Activated CD4-positive, alpha-beta memory T cell treated with anti-CD3 and anti-CD28 coated beads for 36 hours (primary cell): ENCODE measurements at regions of chr1 and their contacts with region 1.

Region 1: DNA sequence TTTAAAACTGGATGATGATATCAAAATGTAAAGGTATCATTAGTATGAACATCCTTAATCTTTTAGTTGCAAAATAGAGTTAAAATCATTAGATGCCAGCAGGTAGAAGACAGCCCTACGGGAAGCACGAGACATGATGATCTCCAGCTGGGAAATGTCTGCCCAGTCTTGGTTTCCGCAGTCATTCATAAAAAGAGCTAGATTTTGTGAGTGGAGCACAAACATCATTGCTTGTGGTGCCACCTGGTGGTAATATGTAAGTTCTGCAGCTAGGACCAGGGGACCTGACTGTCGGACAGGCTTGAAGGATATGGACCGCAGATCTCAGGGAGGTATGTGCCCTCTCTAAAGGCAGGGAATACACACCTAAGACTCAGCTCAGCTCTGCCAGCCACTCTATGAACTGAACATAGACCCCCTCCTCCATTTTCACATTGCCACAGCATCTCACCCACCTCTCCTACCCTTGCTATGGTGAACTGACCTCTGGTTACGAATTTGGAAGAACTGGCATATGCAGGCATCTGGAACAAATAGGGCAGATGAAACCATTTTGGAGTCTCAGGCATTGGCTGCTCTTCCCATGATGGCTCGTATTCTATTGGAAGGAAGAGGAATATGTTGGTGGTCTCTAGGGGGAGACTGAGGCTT is 9.2 kb downstream of the FCMR start:
- DNase-seq: peak; percentile 75
- H3K4me3 Mint-ChIP-seq: no peak overlapping the region
- H3K27ac Mint-ChIP-seq: peak overlapping the region; percentile 19
- H3K4me1 Mint-ChIP-seq: peaks cover 87% of the 10 kb centered on the region
- H3K27me3 Mint-ChIP-seq: no peaks in the 10 kb centered on the region

Region 2: DNA sequence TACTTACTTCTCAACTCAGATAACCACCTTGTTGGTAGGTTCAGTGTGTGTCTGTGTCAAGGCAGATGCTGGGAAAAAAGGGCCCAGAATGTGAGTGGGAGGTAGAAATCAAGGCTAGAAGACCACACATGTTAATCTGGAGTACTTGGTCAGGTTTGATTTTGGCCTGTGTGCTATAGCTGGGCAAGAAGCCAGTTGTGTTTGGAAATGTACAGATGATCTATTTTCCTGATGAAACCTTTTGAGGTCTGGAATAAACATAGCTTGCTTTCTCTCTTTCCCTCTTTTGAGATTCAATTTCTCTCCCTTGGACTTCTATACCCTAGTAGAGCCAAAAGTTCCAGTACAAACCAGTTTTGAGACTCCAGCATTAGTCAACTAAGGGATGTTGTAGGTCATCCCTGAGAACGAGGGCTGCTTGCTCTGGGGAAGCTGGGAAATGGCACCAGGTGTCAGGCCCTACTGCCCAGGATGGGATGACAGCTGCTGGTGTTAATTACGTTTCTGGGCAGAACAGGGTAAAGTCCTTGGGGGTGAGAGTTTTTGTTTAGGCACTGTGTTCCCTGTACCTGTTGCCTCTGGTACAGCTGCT is 212.0 kb before region 1 on chr1:
- CTCF ChIA-PET with region 1: interaction called, 10 read pairs
- POLR2A ChIA-PET with region 1: no interaction called
- intact Hi-C with region 1: no loop called
- DNase-seq: no peak
- H3K4me3 Mint-ChIP-seq: no peak overlapping the region
- H3K27ac Mint-ChIP-seq: peak overlapping the region; percentile 43
- H3K4me1 Mint-ChIP-seq: peaks cover 89% of the 10 kb centered on the region
- H3K27me3 Mint-ChIP-seq: no peaks in the 10 kb centered on the region

Region 3: DNA sequence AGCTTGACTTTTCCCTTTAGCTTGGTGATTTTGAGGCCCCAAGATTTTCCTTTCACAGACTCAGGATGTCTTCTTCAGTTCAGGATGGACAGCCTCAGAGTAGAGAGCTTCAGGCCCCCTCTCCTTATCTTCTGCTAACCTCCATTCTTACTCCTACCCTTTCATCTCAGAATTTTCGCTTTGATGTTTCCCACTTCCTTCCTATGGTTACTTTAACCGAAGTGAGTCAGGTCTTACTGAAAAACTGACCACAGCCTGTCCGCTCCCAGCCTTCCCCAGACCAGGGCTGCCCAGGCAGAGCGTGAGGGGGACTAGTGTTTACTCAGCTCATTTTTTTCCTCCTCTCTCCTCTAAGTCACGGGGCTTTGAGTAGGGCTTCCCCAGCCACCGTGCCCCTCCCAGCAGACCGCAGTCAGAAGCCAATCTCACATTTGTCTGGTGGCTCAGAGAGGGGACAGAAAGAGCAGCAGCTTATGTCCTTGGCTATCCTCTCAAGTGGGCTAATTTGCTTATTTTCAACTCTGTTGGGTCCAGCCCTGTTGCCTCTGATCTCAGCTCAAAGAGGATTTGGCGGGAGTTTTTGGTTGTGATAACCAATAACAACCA is 146.2 kb before region 1 on chr1:
- CTCF ChIA-PET with region 1: interaction called, 39 read pairs
- POLR2A ChIA-PET with region 1: interaction called, 3 read pairs
- intact Hi-C with region 1: no loop called
- DNase-seq: peak; percentile 84
- H3K4me3 Mint-ChIP-seq: peak overlapping the region; percentile 44
- H3K27ac Mint-ChIP-seq: peak overlapping the region; percentile 68
- H3K4me1 Mint-ChIP-seq: peaks cover 69% of the 10 kb centered on the region
- H3K27me3 Mint-ChIP-seq: peaks cover 6% of the 10 kb centered on the region

Region 4: GRCh38 chr1:206856674-206857464 is 55.7 kb before region 1 on chr1:
- CTCF ChIA-PET with region 1: interaction called, 65 read pairs
- POLR2A ChIA-PET with region 1: no interaction called
- intact Hi-C with region 1: loop called (anchors 2 kb)
- DNase-seq: peak; percentile 38
- H3K4me3 Mint-ChIP-seq: no peak overlapping the region
- H3K27ac Mint-ChIP-seq: peak overlapping the region; percentile 1
- H3K4me1 Mint-ChIP-seq: peaks cover 22% of the 10 kb centered on the region
- H3K27me3 Mint-ChIP-seq: no peaks in the 10 kb centered on the region

Region 5: GRCh38 chr1:206895830-206896242 is 16.7 kb before region 1 on chr1:
- CTCF ChIA-PET with region 1: interaction called, 46 read pairs
- POLR2A ChIA-PET with region 1: interaction called, 4 read pairs
- intact Hi-C with region 1: loop called (anchors 1 kb)
- DNase-seq: no peak
- H3K4me3 Mint-ChIP-seq: no peak overlapping the region
- H3K27ac Mint-ChIP-seq: no peak overlapping the region
- H3K4me1 Mint-ChIP-seq: peaks cover 75% of the 10 kb centered on the region
- H3K27me3 Mint-ChIP-seq: peaks cover 4% of the 10 kb centered on the region

Region 6: GRCh38 chr1:206957639-206958038 is 45.1 kb after region 1 on chr1:
- CTCF ChIA-PET with region 1: no interaction called
- POLR2A ChIA-PET with region 1: no interaction called
- intact Hi-C with region 1: no loop called
- DNase-seq: no peak
- H3K4me3 Mint-ChIP-seq: no peak overlapping the region
- H3K27ac Mint-ChIP-seq: no peak overlapping the region
- H3K4me1 Mint-ChIP-seq: peaks cover 22% of the 10 kb centered on the region
- H3K27me3 Mint-ChIP-seq: peaks cover 4% of the 10 kb centered on the region